ENCODE measurements at regions of chr14 and their contacts with region 1.

Region 1: GRCh38 chr14:52068615-52069303 is at the start of gene NID2:
- DNase-seq: peak; percentile 92
- ATAC-seq: peak; percentile 94
- total RNA-seq, gene NID2: 41.8 TPM

Region 2: GRCh38 chr14:51396222-51396815 is 672.4 kb before region 1 on chr14:
- intact Hi-C with region 1: no loop called
- DNase-seq: no peak
- ATAC-seq: peak; percentile 32

Region 3: DNA sequence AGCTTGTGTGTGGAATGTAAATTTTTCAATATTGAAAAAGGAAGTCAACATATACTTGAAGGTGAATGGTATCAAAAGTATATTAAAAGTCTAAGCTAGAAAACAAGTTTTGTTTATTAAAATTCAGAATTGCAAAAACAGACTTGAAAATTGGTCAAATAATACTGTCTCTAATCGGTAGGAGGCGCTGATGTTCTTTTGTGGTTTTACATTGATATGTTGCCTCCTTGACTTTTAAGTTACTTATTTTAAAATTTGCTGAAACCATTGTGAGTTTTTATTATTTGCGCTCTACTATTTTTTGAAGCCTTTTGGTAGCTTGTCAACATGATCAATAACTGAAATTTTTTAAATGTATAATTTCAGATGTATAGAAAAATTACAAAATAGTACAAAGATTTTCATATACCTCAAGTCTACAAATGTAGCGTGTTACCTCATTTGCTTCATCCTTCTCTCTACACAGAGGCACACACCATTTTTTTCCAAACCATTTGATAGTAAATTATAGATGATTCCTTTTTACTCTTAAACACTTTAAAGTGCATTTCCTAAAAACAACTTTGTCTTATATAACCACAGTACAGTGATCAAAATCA is 72.5 kb before region 1 on chr14:
- intact Hi-C with region 1: loop called (anchors 2 kb)
- DNase-seq: no peak
- ATAC-seq: no peak

Region 4: GRCh38 chr14:52015411-52016030 is 53.2 kb before region 1 on chr14:
- intact Hi-C with region 1: loop called (anchors 2 kb)
- DNase-seq: no peak
- ATAC-seq: peak; percentile 23

Region 5: DNA sequence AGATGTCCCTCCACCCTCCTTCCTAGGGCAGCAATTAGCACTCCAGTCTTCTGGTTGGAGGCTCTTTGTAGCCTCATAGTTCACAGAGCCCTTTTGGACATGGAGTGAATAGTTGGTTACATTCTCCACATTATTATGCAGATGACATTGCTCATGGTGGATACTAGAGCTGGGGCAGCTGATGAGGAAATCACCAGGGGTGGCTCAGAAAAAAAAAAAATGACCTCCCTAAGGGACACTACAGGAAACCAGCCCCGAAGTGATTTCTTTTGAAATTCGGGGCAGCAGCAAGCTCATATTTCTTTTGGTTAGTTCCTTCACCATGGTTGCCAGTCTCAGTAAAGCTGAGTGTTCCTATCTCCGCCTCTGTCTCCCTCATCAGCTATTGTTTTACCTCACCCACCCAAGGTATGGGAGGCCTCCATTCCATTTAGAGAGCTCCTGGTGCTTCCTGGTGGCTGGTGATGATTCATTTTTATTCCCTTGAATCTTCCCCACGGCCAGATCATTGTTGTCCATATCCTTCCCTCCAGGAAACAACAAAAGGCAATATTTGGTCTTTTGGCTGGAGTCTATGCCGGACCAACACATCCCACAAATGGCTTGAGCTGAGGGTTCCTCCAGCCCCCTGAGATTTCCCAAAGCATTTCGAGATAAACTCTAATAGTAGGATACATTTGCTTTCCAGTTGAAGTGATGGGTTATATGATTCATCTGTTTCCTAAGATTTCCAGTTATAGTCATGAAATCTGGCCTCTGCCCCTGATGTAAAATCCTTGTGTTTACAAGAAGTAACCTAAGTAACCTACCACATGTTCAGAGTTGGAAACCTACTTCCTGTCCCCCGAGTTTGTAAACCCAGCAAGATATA is 56.3 kb after region 1 on chr14:
- intact Hi-C with region 1: loop called (anchors 2 kb)
- DNase-seq: no peak
- ATAC-seq: peak; percentile 76

Region 6: GRCh38 chr14:52678591-52678990 is 609.8 kb after region 1 on chr14:
- intact Hi-C with region 1: no loop called
- DNase-seq: no peak
- ATAC-seq: no peak

Measured in Right ventricle myocardium inferior (tissue), 1 donor.